ENCODE measurements at regions of chr3 and their contacts with region 1.

Region 1: GRCh38 chr3:187745201-187746058 is at the start of gene BCL6:
- DNase-seq: peak; percentile 92
- ATAC-seq: peak; percentile 50
- H3K4me3 Mint-ChIP-seq: peak within 1 kb of the TSS; percentile 91
- H3K27ac Mint-ChIP-seq: peak within 1 kb of the TSS; percentile 99
- H3K4me1 Mint-ChIP-seq: peaks cover 63% of the 10 kb centered on the region
- H3K27me3 Mint-ChIP-seq: no peaks in the 10 kb centered on the region
- total RNA-seq, gene BCL6: 42.9 to 52.8 TPM

Region 2: GRCh38 chr3:187763850-187764648 is 18.6 kb after region 1 on chr3:
- CTCF ChIA-PET with region 1: interaction called, 12 read pairs
- POLR2A ChIA-PET with region 1: interaction called, 11 read pairs
- intact Hi-C with region 1: no loop called
- DNase-seq: no peak
- ATAC-seq: no peak
- H3K4me3 Mint-ChIP-seq: no peak overlapping the region
- H3K27ac Mint-ChIP-seq: no peak overlapping the region
- H3K4me1 Mint-ChIP-seq: peaks cover 18% of the 10 kb centered on the region
- H3K27me3 Mint-ChIP-seq: peaks cover 19% of the 10 kb centered on the region

Region 3: DNA sequence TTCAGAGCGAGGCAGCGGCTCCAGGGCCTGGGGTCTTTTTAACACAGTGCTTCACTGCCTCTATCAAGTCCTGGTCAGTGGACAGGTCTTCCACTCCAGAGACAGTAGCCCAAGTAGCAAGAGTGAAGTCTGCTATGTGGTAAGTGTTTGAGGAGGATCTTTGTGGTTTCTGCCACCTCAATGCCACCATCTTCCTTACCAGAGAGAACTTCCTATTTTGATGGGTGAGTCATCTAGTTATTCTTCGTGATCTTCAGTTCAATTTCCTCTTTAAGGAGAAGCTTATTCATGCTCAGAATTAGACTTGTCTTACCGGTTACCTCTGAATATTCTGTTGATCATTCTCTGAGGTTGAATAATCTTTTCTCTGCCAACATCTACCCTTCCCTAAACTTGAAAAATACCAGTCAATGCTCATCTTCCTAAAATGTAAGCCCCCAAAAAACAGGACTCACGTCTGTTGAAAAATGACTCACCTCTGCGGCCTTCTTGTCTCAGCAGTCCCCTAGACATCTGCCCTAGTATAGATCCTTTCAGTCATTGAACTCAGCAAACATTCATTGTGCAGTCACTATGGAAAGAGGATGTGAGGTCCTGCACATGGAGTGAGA is 32.0 kb after region 1 on chr3:
- CTCF ChIA-PET with region 1: interaction called, 9 read pairs
- POLR2A ChIA-PET with region 1: interaction called, 8 read pairs
- intact Hi-C with region 1: loop called (anchors 1 kb)
- DNase-seq: peak; percentile 69
- ATAC-seq: peak; percentile 88
- H3K4me3 Mint-ChIP-seq: peak overlapping the region; percentile 27
- H3K27ac Mint-ChIP-seq: peak overlapping the region; percentile 92
- H3K4me1 Mint-ChIP-seq: peaks cover 38% of the 10 kb centered on the region
- H3K27me3 Mint-ChIP-seq: peaks cover 11% of the 10 kb centered on the region

Region 4: DNA sequence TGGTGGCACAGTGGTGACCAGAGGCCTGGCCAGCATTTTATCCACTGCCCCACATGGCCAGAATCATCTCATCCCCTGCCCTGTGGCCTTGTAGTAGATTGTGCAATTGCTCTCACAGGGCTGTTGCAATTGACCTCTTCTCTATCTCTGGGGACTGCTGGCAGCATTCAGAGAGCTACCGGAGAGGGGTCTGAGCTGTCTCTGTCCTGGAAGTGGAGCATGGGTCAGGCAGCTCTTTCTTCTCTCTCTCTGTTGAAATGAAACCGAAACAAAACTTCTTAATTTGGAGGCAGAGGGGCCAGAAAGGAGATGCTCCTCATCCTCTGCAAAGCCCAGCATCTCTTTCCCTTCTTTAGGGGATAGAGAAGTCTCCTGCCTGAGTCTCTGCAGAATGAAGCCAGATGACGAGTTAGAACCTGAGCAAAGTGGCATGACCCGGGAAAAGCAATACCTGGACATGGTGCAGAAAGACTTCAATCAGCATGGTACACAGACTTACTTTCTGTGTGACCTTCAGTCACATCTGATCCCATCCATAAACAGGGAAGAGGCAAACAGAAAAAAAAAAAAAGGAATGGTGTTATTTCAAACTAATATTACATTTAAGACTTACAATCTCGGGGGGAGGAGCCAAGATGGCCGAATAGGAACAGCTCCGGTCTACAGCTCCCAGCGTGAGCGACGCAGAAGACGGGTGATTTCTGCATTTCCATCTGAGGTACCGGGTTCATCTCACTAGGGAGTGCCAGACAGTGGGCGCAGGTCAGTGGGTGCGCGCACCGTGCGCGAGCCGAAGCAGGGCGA is 144.4 kb after region 1 on chr3:
- CTCF ChIA-PET with region 1: no interaction called
- POLR2A ChIA-PET with region 1: no interaction called
- intact Hi-C with region 1: no loop called
- DNase-seq: no peak
- ATAC-seq: no peak
- H3K4me3 Mint-ChIP-seq: no peak overlapping the region
- H3K27ac Mint-ChIP-seq: no peak overlapping the region
- H3K4me1 Mint-ChIP-seq: peaks cover 4% of the 10 kb centered on the region
- H3K27me3 Mint-ChIP-seq: no peaks in the 10 kb centered on the region

Region 5: DNA sequence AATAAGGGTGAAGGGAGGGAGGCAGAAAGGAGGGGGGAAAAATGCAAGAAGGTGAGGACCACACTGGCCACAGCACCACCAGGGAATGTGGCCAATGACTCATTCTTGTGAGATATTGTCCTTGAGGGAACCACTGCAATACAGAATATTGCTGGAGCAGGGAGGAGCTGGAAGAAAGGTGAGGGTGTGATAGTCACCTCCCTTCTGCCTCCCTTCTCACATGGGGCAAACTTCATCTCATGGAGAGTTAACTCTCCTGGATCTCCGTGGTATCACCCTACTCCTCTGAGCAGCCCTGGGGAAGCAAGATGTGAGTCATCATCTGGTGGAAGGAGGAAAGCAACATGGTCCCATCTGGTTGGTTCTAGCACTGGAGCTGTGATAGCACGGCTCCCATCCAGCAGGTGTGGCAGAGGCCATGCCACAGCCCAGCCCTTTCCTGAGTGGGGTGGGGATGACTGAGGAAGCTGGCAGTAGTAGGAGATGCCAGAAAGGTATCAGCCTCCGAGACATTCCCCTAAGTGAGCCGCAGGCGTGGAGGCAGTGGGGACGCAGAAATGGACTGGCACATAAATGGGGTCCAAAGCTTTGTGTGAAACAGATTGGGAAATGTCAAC is 292.6 kb after region 1 on chr3:
- CTCF ChIA-PET with region 1: no interaction called
- POLR2A ChIA-PET with region 1: no interaction called
- intact Hi-C with region 1: no loop called
- DNase-seq: no peak
- ATAC-seq: no peak
- H3K4me3 Mint-ChIP-seq: no peak overlapping the region
- H3K27ac Mint-ChIP-seq: no peak overlapping the region
- H3K4me1 Mint-ChIP-seq: peaks cover 6% of the 10 kb centered on the region
- H3K27me3 Mint-ChIP-seq: no peaks in the 10 kb centered on the region

Region 6: GRCh38 chr3:188061133-188061532 is 315.7 kb after region 1 on chr3:
- CTCF ChIA-PET with region 1: interaction called, 12 read pairs
- POLR2A ChIA-PET with region 1: interaction called, 4 read pairs
- intact Hi-C with region 1: loop called (anchors 1 kb)
- DNase-seq: peak; percentile 76
- ATAC-seq: peak; percentile 98
- H3K4me3 Mint-ChIP-seq: peak overlapping the region; percentile 25
- H3K27ac Mint-ChIP-seq: peak overlapping the region; percentile 77
- H3K4me1 Mint-ChIP-seq: peaks cover 35% of the 10 kb centered on the region
- H3K27me3 Mint-ChIP-seq: no peaks in the 10 kb centered on the region

Region 7: GRCh38 chr3:188286087-188286513 is 540.7 kb after region 1 on chr3:
- CTCF ChIA-PET with region 1: interaction called, 58 read pairs
- POLR2A ChIA-PET with region 1: interaction called, 29 read pairs
- intact Hi-C with region 1: loop called (anchors 1 kb)
- DNase-seq: peak; percentile 29
- ATAC-seq: no peak
- H3K4me3 Mint-ChIP-seq: no peak overlapping the region
- H3K27ac Mint-ChIP-seq: peak overlapping the region; percentile 72
- H3K4me1 Mint-ChIP-seq: peaks cover 55% of the 10 kb centered on the region
- H3K27me3 Mint-ChIP-seq: no peaks in the 10 kb centered on the region

Region 8: DNA sequence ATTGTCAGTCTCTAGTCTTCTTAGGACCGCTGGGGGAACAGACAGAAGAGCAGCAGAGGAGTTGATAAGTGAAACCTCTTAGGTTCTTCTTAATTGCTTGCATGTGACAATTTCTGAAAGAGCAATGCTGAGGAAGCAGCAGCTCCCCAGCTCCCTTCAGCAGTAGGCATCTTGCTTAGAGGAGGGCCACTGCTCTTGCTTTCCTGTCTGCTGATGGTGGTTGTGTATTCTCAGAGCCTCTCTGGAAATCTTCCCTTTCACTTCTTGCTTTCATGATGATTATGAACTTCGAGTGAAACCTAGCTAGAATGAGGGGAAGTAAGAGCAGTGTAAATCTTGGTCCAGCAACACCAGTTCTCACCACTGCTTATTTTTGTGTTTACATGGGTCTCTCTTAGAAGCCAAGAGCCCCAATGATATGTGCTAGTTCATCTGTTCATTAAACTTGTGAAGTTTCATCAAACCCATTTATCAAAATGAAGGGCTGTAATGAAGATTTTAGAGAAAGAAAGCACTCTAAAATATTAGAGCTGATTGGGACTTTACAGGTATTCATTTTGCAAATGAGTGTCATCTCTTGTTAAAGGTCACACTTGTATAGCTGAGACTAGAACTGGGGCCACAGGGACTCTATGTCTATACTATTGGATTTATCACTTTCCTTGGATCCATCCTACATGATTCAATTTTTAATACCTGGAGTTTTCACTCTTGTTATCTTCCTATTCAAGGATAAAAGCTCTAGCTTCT is 655.2 kb after region 1 on chr3:
- CTCF ChIA-PET with region 1: interaction called, 5 read pairs
- POLR2A ChIA-PET with region 1: no interaction called
- intact Hi-C with region 1: loop called (anchors 2 to 10 kb)
- DNase-seq: peak; percentile 46
- ATAC-seq: peak; percentile 85
- H3K4me3 Mint-ChIP-seq: no peak overlapping the region
- H3K27ac Mint-ChIP-seq: peak overlapping the region; percentile 26
- H3K4me1 Mint-ChIP-seq: peaks cover 69% of the 10 kb centered on the region
- H3K27me3 Mint-ChIP-seq: no peaks in the 10 kb centered on the region

Region 9: GRCh38 chr3:188421836-188422540 is 676.6 kb after region 1 on chr3:
- CTCF ChIA-PET with region 1: no interaction called
- POLR2A ChIA-PET with region 1: no interaction called
- intact Hi-C with region 1: no loop called
- DNase-seq: no peak
- ATAC-seq: no peak
- H3K4me3 Mint-ChIP-seq: no peak overlapping the region
- H3K27ac Mint-ChIP-seq: no peak overlapping the region
- H3K4me1 Mint-ChIP-seq: peaks cover 6% of the 10 kb centered on the region
- H3K27me3 Mint-ChIP-seq: no peaks in the 10 kb centered on the region

Region 10: GRCh38 chr3:188683032-188683521 is 937.6 kb after region 1 on chr3:
- CTCF ChIA-PET with region 1: no interaction called
- POLR2A ChIA-PET with region 1: no interaction called
- intact Hi-C with region 1: loop called (anchors 5 to 10 kb)
- DNase-seq: peak; percentile 69
- ATAC-seq: peak; percentile 97
- H3K4me3 Mint-ChIP-seq: no peak overlapping the region
- H3K27ac Mint-ChIP-seq: no peak overlapping the region
- H3K4me1 Mint-ChIP-seq: peaks cover 41% of the 10 kb centered on the region
- H3K27me3 Mint-ChIP-seq: no peaks in the 10 kb centered on the region

Measured in activated CD4-positive, alpha-beta T cell treated with anti-CD3 and anti-CD28 coated beads for 36 hours (primary cell).